Activated T-helper 2 cell treated with anti-CD3 and anti-CD28 coated beads, Interferon-gamma antibody, Interleukin-2, Interleukin-4, amounts not matched to agents 10 μg/mL and 5 μg/mL and 100 μg/mL, durations not matched to agents 14 hours and 24 hours and 36 hours (primary cell): ENCODE measurements at regions of chr3 and their contacts with region 1.

Region 1: GRCh38 chr3:177144923-177145780 is 52.1 kb downstream of the TBL1XR1 start:
- DNase-seq: no peak
- H3K4me3 Mint-ChIP-seq: peak overlapping the region; percentile 61
- H3K27ac Mint-ChIP-seq: peak overlapping the region; percentile 86
- H3K4me1 Mint-ChIP-seq: peaks cover 62% of the 10 kb centered on the region
- H3K27me3 Mint-ChIP-seq: no peaks in the 10 kb centered on the region

Region 2: DNA sequence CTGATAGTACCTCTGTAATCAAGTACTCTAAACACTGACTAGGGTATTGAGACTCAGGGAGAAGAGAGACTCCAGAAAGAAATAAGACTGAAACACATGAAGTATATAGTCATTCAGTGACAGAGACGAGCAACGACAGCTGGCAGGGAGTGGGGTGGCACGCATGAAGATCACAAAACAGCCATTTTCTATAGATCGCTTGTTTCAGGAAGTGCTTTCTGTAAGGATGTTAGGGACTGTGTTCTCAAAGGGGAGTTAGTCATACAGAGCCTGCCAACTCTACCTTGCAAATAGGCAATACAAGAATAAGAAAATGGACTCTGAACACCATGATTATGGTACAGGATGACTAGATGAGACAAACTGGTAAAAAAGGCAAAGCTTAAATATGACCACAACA is 87.4 kb before region 1 on chr3:
- intact Hi-C with region 1: loop called (anchors 2 kb)
- DNase-seq: peak; percentile 22
- H3K4me3 Mint-ChIP-seq: no peak overlapping the region
- H3K27ac Mint-ChIP-seq: no peak overlapping the region
- H3K4me1 Mint-ChIP-seq: peaks cover 22% of the 10 kb centered on the region
- H3K27me3 Mint-ChIP-seq: no peaks in the 10 kb centered on the region

Region 3: GRCh38 chr3:177109688-177110330 is 35.3 kb before region 1 on chr3:
- intact Hi-C with region 1: loop called (anchors 5 kb)
- DNase-seq: no peak
- H3K4me3 Mint-ChIP-seq: no peak overlapping the region
- H3K27ac Mint-ChIP-seq: no peak overlapping the region
- H3K4me1 Mint-ChIP-seq: peaks cover 58% of the 10 kb centered on the region
- H3K27me3 Mint-ChIP-seq: no peaks in the 10 kb centered on the region

Region 4: GRCh38 chr3:177124882-177125281 is 20.3 kb before region 1 on chr3:
- intact Hi-C with region 1: loop called (anchors 2 kb)
- DNase-seq: no peak
- H3K4me3 Mint-ChIP-seq: no peak overlapping the region
- H3K27ac Mint-ChIP-seq: peak overlapping the region; percentile 10
- H3K4me1 Mint-ChIP-seq: peaks cover 39% of the 10 kb centered on the region
- H3K27me3 Mint-ChIP-seq: no peaks in the 10 kb centered on the region

Region 5: GRCh38 chr3:177781686-177782161 is 636.6 kb after region 1 on chr3:
- intact Hi-C with region 1: loop called (anchors 10 kb)
- DNase-seq: no peak
- H3K4me3 Mint-ChIP-seq: no peak overlapping the region
- H3K27ac Mint-ChIP-seq: no peak overlapping the region
- H3K4me1 Mint-ChIP-seq: peaks cover 9% of the 10 kb centered on the region
- H3K27me3 Mint-ChIP-seq: no peaks in the 10 kb centered on the region